HCT116 (cell line): ENCODE measurements at regions of chr16 and their contacts with region 1.

Region 1: GRCh38 chr16:56608043-56608875 is at the start of gene MT2A:
- DNase-seq: peak; percentile 95
- ATAC-seq: peak; percentile 71
- H3K4me3 ChIP-seq: peak within 1 kb of the TSS; percentile 63 to 85
- H3K27ac ChIP-seq: peak within 1 kb of the TSS; percentile 96
- H3K4me1 ChIP-seq: peaks cover 64 to 86% of the 10 kb centered on the region in 2 experiments
- H3K27me3 ChIP-seq: no peaks in the 10 kb centered on the region
- CTCF ChIP-seq: no peak
- POLR2A ChIP-seq: peak; percentile 95
- RAD21 ChIP-seq: no peak
- total RNA-seq, gene MT2A: 710 TPM

Region 2: DNA sequence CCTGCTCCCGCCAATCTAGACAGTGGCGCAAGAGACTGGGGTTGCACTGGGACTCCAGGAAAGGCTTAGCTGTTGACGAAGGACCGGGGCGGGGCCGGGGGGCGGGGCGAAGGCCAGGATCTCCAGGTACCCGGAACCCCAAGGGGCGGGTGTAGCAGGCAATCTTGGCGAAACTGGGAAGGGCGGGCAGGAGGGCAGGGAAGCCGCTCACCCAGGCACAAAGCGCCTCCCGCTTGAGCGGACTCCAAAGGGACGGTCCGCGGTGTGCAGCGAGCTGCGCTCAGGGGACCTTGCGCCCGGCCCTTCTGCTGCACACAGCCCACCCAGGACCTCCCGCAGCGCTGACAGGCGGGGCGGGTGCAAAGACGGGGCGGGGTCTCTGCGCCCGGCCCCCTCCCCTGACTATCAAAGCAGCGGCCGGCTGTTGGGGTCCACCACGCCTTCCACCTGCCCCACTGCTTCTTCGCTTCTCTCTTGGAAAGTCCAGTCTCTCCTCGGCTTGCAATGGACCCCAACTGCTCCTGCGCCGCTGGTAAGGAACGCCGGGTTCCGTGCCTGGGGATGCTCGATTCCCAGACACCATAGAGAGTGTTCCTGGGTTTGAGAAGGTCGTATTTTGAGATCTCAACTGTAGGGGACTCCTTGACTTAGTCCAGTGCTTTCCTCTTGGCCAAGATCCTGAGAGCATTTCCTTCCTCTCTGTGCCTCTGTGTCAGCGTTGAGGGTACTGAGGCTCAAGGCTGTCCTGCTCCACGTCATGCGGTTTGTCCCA is 49.5 kb after region 1 on chr16 and contains the start of gene MT1F:
- CTCF ChIA-PET with region 1: no interaction called
- POLR2A ChIA-PET with region 1: interaction called, 4 read pairs
- RAD21 ChIA-PET with region 1: no interaction called
- intact Hi-C with region 1: loop called (anchors 2 kb)
- DNase-seq: peak; percentile 83
- ATAC-seq: peak; percentile 87
- H3K4me3 ChIP-seq: peak within 1 kb of the TSS; percentile 47 to 55
- H3K27ac ChIP-seq: no peak within 1 kb of the TSS; the same call in 1 of the 2 replicates
- H3K4me1 ChIP-seq: peaks cover 26 to 54% of the 10 kb centered on the region in 2 experiments
- H3K27me3 ChIP-seq: no peaks in the 10 kb centered on the region
- CTCF ChIP-seq: no peak
- POLR2A ChIP-seq: no peak
- RAD21 ChIP-seq: peak; percentile 37
- total RNA-seq, gene MT1F: 7.3 TPM